Transverse colon (tissue), 4 donors: ENCODE measurements at regions of chr18 and their contacts with region 1.

Region 1: GRCh38 chr18:5066380-5066977 is 130.6 kb downstream of the AKAIN1 start:
- DNase-seq: peak; percentile 10
- H3K4me3 ChIP-seq: no peak overlapping the region
- H3K27ac ChIP-seq: no peak overlapping the region
- H3K4me1 ChIP-seq: no peaks in the 10 kb centered on the region
- H3K27me3 ChIP-seq: no peaks in the 10 kb centered on the region
- CTCF ChIP-seq: peak in 3 of 5 experiments; percentile 12 to 34 (median 31)
- EP300 ChIP-seq: no peak
- POLR2A ChIP-seq: no peak

Region 2: DNA sequence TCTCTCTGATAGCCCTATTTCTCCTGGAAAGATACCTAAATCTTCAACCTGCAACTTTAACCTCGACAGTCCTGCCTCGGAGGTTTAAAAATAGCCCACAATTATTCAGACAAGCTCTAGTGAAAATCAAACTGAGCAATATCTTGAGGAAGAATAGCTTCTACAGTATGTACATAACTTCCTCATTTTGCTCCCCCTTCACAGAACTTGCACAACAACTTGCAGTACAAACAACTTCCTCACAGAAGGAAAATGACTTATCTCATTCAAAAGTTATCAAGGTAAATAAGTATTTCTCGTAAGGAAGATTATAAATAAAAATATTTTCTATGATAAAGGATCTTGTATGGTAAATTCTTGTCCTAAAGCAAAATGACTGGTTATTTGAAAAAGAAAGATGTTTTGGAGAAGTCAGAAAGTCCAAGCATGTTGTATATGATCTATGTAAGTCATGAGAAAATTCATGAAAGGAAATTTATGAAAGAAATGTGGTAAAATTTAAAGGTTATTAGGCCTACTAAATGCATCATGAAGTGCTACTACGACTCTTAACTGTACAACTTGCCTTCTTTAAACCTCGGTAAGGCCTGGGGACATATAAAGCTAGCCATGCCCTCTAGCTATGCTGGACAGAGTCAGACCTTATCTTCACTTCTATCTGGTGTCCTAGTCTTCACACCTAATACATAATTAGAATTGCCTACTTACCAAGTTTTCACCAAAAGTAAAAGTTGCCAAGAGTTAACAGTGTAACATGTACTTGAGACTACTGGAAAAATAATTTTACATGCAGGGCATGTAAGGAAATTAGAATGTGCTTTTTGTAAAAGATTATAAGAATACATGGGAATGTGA is 1005.8 kb before region 1 on chr18:
- in situ Hi-C with region 1: no loop called
- intact Hi-C with region 1: loop called (anchors 5 kb)
- DNase-seq: no peak
- H3K4me3 ChIP-seq: no peak overlapping the region
- H3K27ac ChIP-seq: no peak overlapping the region
- H3K4me1 ChIP-seq: no peaks in the 10 kb centered on the region
- H3K27me3 ChIP-seq: no peaks in the 10 kb centered on the region
- CTCF ChIP-seq: no peak
- EP300 ChIP-seq: no peak
- POLR2A ChIP-seq: no peak

Region 3: GRCh38 chr18:4888251-4889040 is 178.0 kb before region 1 on chr18:
- in situ Hi-C with region 1: no loop called
- intact Hi-C with region 1: no loop called
- DNase-seq: no peak
- H3K4me3 ChIP-seq: no peak overlapping the region
- H3K27ac ChIP-seq: no peak overlapping the region
- H3K4me1 ChIP-seq: no peaks in the 10 kb centered on the region
- H3K27me3 ChIP-seq: no peaks in the 10 kb centered on the region
- CTCF ChIP-seq: no peak
- EP300 ChIP-seq: no peak
- POLR2A ChIP-seq: no peak

Region 4: DNA sequence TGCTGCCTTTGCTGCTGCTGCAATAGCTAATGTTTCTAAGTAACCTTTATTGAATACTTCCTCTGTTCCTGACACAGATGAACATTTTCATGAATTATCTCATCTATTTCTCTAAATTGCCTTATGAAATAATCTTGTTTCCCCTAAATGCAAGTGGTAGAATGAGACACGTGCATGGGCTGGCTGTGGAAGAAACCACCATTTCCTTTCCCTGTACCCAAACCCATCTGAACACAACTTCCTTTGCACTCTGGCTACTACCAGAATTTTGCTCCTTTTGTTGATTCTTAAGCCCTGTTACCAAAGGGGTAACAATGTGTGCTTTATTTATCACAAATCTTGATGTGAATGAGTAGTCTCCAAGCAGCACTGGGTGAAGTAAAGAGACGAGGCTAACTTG is 101.4 kb after region 1 on chr18:
- in situ Hi-C with region 1: no loop called
- intact Hi-C with region 1: no loop called
- DNase-seq: no peak
- H3K4me3 ChIP-seq: no peak overlapping the region
- H3K27ac ChIP-seq: no peak overlapping the region
- H3K4me1 ChIP-seq: no peaks in the 10 kb centered on the region
- H3K27me3 ChIP-seq: no peaks in the 10 kb centered on the region
- CTCF ChIP-seq: no peak
- EP300 ChIP-seq: no peak
- POLR2A ChIP-seq: no peak